Activated B cell treated with CpG ODN at 0.5 μM for 24 hours (primary cell): ENCODE measurements at regions of chr20 and their contacts with region 1.

Region 1: DNA sequence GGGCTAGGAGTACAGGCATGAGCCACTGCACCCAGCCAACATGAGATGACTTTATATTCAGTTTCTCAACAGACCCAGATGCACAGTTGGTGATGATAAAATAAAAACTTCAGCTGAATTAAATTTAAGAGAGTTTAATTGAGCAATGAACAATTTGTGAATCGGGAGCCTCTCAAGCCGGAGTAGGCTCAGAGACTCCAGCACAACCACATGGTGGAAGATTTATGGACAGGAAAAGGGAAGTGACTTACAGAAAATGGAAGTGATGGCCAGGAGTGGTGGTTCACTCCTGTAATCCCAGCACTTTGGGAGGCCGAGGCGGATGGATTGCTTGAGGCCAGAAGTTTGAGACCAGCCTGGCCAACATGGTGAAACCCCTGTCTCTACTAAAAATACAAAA is 10.4 kb upstream of the BCAS4 start:
- DNase-seq: no peak
- ATAC-seq: no peak
- H3K4me3 Mint-ChIP-seq: no peak overlapping the region
- H3K27ac Mint-ChIP-seq: no peak overlapping the region
- H3K4me1 Mint-ChIP-seq: no peaks in the 10 kb centered on the region
- H3K27me3 Mint-ChIP-seq: peaks cover 9% of the 10 kb centered on the region
- CTCF ChIP-seq: no peak

Region 2: DNA sequence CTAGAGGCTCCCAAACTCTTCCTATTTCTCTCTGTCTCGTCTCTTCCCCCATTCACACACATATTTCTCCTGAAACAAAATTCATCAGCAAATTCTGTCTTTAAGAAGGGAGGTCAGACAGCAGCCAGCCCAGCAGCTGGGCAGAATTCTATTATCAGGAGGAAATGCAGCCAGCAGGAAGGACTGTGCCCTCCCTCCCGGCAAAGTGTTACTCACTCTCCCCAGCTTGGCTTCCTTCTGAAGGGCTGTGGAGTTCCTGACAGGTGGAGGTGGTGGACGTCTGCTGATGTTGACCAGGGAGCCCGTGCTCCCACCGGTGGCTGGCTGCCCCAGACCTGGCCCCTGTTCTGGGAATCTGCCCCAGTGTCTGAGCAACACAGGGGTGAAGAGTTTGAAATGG is 1339.3 kb before region 1 on chr20:
- CTCF ChIA-PET with region 1: no interaction called
- POLR2A ChIA-PET with region 1: interaction called, 12 read pairs
- intact Hi-C with region 1: no loop called
- DNase-seq: no peak
- ATAC-seq: no peak
- H3K4me3 Mint-ChIP-seq: no peak overlapping the region
- H3K27ac Mint-ChIP-seq: no peak overlapping the region
- H3K4me1 Mint-ChIP-seq: no peaks in the 10 kb centered on the region
- H3K27me3 Mint-ChIP-seq: peaks cover 23% of the 10 kb centered on the region
- CTCF ChIP-seq: no peak

Region 3: DNA sequence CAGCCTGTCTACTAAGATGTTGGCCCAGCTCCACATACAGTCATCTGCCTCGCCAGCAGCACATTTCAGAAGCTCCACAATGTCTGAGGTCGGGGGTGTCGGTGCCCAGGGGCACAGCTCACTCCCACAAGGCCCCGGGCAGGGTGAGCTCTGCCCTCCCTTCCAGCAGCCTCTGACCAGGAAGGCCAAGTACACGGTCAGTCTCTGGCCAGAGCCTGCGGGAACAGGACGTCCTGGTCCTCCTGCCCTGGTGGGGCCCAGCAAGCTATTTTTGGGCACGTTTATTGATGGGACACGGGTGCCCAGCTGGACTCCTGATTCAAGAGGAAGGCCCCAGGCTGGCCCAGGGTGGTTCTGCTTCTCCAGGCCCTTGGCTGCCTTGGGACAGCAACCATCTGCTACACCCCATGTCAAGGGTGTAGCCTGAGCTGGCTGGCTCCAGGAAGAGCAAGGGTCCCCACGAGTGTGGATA is 389.2 kb before region 1 on chr20:
- CTCF ChIA-PET with region 1: no interaction called
- POLR2A ChIA-PET with region 1: no interaction called
- intact Hi-C with region 1: no loop called
- DNase-seq: no peak
- ATAC-seq: no peak
- H3K4me3 Mint-ChIP-seq: no peak overlapping the region
- H3K27ac Mint-ChIP-seq: no peak overlapping the region
- H3K4me1 Mint-ChIP-seq: peaks cover 5% of the 10 kb centered on the region
- H3K27me3 Mint-ChIP-seq: peaks cover 3% of the 10 kb centered on the region
- CTCF ChIP-seq: no peak

Region 4: GRCh38 chr20:50415516-50416113 is 368.8 kb before region 1 on chr20:
- CTCF ChIA-PET with region 1: no interaction called
- POLR2A ChIA-PET with region 1: no interaction called
- intact Hi-C with region 1: no loop called
- DNase-seq: no peak
- ATAC-seq: no peak
- H3K4me3 Mint-ChIP-seq: no peak overlapping the region
- H3K27ac Mint-ChIP-seq: no peak overlapping the region
- H3K4me1 Mint-ChIP-seq: no peaks in the 10 kb centered on the region
- H3K27me3 Mint-ChIP-seq: peaks cover 13% of the 10 kb centered on the region
- CTCF ChIP-seq: no peak

Region 5: GRCh38 chr20:50569864-50570836 is 214.3 kb before region 1 on chr20:
- CTCF ChIA-PET with region 1: no interaction called
- POLR2A ChIA-PET with region 1: no interaction called
- intact Hi-C with region 1: no loop called
- DNase-seq: peak; percentile 20
- ATAC-seq: peak; percentile 90
- H3K4me3 Mint-ChIP-seq: peak overlapping the region; percentile 46
- H3K27ac Mint-ChIP-seq: peak overlapping the region; percentile 87
- H3K4me1 Mint-ChIP-seq: peaks cover 70% of the 10 kb centered on the region
- H3K27me3 Mint-ChIP-seq: no peaks in the 10 kb centered on the region
- CTCF ChIP-seq: no peak

Region 6: DNA sequence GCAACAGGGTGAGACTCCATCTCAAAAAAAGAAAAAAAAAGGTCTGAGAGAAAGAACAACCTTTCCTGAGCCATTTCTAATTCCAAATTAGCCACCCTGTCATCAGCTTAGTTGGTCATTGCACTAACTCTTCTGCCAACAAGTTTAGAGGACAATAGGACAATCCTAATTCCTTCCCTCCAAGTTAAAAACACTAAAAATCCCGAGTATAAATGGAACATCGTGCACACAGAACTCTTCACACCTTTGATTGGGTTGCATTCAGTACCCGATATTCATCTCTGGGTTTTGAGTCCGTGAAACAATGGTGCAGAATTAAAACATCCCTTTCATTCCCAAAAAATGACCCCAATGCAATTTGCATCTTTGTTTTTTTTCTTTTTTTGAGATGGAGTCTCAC is 30.0 kb before region 1 on chr20:
- CTCF ChIA-PET with region 1: no interaction called
- POLR2A ChIA-PET with region 1: no interaction called
- intact Hi-C with region 1: loop called (anchors 2 kb)
- DNase-seq: no peak
- ATAC-seq: no peak
- H3K4me3 Mint-ChIP-seq: no peak overlapping the region
- H3K27ac Mint-ChIP-seq: no peak overlapping the region
- H3K4me1 Mint-ChIP-seq: no peaks in the 10 kb centered on the region
- H3K27me3 Mint-ChIP-seq: no peaks in the 10 kb centered on the region
- CTCF ChIP-seq: no peak